AG04449 (cell line): ENCODE measurements at regions of chr11 and their contacts with region 1.

Region 1: GRCh38 chr11:64778508-64779346 is at the start of gene SF1:
- DNase-seq: peak; percentile 97
- H3K4me3 ChIP-seq: peak within 1 kb of the TSS; percentile 93
- CTCF ChIP-seq: no peak

Region 2: DNA sequence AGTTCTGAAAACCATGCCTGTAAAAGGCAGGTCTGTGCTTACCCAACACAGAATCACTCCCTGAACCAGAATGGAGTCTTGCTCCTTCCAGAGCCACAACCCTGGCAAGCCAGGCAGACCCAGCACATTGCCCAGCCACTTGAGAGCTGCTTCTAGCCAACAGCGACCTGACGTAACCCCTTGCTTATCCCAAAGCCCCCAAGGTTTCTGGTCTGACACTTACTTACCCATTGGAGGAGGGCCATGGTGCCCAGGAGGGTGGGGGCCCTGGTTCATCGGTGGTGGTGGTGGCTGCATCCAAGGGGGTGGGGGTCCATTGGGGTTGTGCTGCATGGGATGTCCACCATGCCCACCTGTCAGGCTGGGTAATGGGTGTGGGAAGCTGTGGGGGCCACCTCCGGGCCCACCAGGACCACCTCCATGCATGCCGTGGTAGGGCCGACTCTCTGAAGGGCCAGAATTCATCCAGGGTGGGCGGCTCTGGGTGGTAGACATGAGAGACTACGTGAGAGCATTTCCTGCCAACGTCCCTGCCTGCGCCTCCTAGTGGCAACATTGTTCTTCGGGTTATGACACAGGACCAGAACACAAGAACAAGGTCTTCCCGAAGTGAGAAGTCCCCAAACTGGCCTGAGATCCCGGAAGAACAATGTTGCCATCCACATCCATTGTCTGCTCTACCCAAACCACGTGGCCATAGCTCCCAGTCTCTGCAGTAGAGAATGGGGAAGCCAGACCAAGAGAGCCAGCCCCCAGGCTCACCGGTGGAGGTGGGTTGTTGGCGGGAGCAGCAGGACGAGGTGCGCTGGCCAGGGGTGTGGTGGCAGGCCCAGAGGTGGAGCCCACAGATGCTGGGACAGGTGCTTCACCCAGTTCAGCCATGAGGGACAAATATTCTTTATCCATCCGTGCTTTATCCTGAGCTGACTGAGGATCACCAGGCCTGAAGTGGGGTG is 11.1 kb before region 1 on chr11:
- CTCF ChIA-PET with region 1: interaction called, 34 read pairs
- POLR2A ChIA-PET with region 1: no interaction called
- DNase-seq: no peak
- H3K4me3 ChIP-seq: no peak overlapping the region
- CTCF ChIP-seq: peak; percentile 69

Region 3: GRCh38 chr11:64916775-64917662 is 138.3 kb after region 1 on chr11 and contains the start of gene ATG2A:
- CTCF ChIA-PET with region 1: no interaction called
- POLR2A ChIA-PET with region 1: no interaction called
- DNase-seq: peak; percentile 96
- H3K4me3 ChIP-seq: peak within 1 kb of the TSS; percentile 64
- CTCF ChIP-seq: no peak